ENCODE measurements at regions of chr12 and their contacts with region 1.

Region 1: DNA sequence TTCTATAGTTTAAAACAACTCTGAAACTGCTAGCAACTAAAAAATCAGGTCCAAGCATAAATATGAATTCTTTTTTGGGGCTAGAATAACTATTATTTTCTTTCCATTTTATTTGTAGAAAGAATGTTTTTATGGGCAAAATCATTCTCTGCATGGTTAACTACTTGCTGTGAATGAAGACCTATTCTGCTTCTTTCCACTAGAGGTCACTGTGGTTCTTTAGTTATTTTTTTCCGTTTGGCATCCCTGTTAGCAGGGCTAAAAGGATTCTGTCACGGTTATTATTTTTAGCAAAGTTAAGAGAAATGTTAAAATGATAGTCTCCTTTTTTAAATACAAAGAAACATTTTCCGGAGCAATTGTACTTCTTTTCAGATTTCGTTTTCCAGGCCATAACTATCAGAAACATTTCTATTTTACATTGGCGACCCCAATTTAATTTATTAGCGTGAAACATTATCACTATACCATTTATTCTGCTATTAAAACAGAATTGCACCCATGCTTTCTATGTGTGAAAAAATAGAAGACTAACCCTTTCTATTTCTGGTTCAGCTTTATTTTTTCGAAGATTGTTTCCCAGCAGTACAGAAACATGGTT is 404.8 kb downstream of the ATP23 start:
- DNase-seq: no peak
- ATAC-seq: peak in 1 of 4 donors; percentile 62
- H3K4me3 ChIP-seq: no peak overlapping the region
- H3K27ac ChIP-seq: no peak overlapping the region
- H3K4me1 ChIP-seq: peaks cover 0 to 5% (median 0%) of the 10 kb centered on the region in 12 donors
- H3K27me3 ChIP-seq: no peaks in the 10 kb centered on the region
- CTCF ChIP-seq: peak; percentile 74 to 91 (median 84)
- POLR2A ChIP-seq: no peak

Region 2: DNA sequence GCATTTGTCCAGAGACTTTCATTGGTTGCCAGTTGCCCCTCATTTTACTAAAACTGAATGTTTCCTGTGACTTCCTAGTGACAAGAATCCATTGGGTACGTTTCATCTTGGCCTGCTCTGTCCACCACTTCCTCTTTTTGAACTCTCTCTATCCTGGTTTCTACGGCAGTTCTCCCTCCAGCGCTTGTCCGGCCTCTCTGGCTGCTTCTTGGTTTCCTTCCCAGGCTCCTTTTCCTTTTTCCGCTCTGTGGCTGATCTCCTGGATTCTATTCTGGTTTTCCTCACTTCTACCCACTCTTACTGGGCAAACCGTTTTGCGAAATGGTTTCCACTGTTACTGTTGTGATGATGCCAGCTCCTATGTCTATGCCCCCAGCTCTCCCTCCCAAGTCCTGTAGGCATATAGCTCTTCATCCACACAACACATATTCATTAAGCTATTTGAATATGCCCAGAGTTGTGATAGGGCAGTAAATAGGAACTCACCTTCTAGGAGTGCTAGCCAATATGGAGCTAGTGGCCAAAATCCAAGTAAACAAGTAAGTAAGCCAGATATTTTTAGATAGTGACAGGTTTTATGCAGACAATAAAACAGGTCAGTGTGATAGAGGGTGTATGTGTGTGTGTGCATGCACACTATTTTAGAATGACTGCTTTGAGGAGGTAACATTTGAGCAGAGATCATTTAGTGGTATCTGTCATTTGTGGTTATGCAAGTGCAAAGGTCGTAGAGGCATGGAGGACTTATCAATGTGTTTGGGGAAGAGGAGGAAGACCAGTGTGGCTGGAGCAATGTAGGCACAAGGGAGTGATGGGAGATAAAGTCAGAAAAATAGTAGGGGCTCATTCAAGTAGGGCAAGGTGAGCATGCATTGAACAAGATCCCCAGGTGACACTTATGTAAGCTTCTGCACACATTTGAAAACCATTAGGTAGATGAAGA is 471.7 kb before region 1 on chr12:
- intact Hi-C with region 1: no loop called
- DNase-seq: no peak
- ATAC-seq: peak; percentile 37 to 78 (median 64)
- H3K4me3 ChIP-seq: no peak overlapping the region
- H3K27ac ChIP-seq: peak overlapping the region in 10 of 12 donors; percentile 1 to 64 (median 52)
- H3K4me1 ChIP-seq: peaks cover 0 to 31% (median 24%) of the 10 kb centered on the region in 12 donors
- H3K27me3 ChIP-seq: no peaks in the 10 kb centered on the region
- CTCF ChIP-seq: no peak
- POLR2A ChIP-seq: no peak

Region 3: GRCh38 chr12:58443273-58443980 is 97.3 kb after region 1 on chr12:
- intact Hi-C with region 1: loop called in 8 of 10 experiments (anchors 2 to 10 kb)
- DNase-seq: no peak
- ATAC-seq: peak in 2 of 4 donors; percentile 16 to 33
- H3K4me3 ChIP-seq: no peak overlapping the region
- H3K27ac ChIP-seq: no peak overlapping the region
- H3K4me1 ChIP-seq: peaks cover 0 to 12% (median 0%) of the 10 kb centered on the region in 12 donors
- H3K27me3 ChIP-seq: no peaks in the 10 kb centered on the region
- CTCF ChIP-seq: peak in 11 of 12 donors; percentile 27 to 53 (median 42)
- POLR2A ChIP-seq: no peak

Region 4: DNA sequence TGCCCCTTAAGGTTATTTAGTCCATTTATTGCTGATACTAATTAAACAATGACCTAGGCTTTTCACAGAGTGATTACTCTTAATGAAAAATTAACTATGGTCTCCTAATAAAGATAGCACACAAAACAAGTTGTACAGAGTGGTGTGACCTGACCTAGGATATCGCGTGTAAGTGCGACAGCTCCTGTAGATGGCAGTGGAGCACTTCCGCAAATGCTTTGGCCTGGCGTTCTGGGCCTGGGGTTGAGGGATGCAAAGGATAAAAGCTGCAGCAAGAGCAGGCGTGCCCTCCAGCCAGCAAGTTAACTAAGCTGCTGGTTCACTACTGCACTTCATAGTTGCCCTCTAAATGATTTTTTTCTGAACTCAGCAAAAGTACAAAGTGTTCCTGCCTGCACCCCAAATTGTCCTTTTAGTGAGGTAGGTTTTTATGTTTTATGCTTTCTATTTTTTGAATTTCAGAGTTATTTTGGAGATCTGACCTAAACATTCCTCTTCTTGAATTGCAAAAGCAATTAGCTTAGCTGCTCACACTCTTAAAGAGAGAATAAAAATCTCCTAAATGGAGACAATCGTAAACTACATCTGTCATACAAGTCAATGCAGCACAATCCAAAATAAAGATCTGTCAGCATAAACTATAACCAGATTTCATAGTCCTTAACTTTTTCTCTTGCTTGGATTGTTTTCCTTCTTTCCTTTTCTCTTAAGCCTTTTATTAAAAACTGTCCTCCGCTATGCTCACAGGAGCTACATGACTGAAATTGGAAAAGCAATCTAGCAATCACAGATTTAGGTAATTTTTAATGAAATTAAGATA is 194.6 kb after region 1 on chr12:
- intact Hi-C with region 1: loop called in 2 of 10 experiments (anchors 10 kb)
- DNase-seq: peak; percentile 43 to 67 (median 60)
- ATAC-seq: peak; percentile 82 to 91 (median 88)
- H3K4me3 ChIP-seq: no peak overlapping the region
- H3K27ac ChIP-seq: no peak overlapping the region
- H3K4me1 ChIP-seq: peaks cover 0 to 5% (median 0%) of the 10 kb centered on the region in 12 donors
- H3K27me3 ChIP-seq: no peaks in the 10 kb centered on the region
- CTCF ChIP-seq: peak; percentile 54 to 80 (median 71)
- POLR2A ChIP-seq: no peak

Region 5: DNA sequence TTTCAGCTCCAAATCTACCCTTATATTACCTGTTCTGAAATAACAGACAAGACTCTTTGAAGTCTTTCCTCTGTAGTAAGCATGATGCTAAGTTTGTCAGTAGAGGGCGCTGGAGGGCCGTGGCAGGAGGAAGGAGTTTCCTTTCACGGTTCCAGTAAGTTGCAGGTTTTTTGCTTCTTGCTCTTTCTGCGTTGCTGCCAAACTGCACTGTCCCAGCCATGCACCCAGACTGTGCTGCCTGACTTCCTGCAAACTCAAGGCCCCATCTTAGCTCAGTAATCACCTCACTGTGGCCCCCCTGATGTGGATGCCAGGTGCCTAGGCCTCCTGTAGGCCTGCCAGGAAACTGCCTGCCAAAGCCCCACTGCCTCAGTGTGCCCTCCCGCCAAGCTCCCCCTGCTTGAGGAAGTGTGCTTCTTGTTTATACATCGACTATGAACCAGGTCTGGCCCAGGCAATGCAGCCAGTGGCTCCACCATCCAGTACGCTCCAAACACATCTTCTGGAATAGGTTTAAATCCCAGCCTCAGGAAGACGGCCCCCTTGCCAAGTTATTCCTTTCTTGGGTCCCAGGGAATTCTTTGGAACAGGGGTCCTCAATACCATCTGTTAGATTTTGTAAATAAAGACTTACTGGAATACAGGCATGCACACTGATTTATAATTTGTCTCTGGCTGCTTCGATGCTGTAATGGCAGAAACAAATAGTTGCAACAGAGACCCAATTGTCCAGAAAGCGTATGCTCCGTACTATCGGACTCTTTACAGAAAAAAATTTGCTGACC is 767.9 kb after region 1 on chr12:
- intact Hi-C with region 1: loop called in 1 of 10 experiments (anchors 10 kb)
- DNase-seq: peak; percentile 38 to 71 (median 66)
- ATAC-seq: peak; percentile 64 to 79 (median 74)
- H3K4me3 ChIP-seq: no peak overlapping the region
- H3K27ac ChIP-seq: no peak overlapping the region
- H3K4me1 ChIP-seq: peaks cover 0 to 4% (median 0%) of the 10 kb centered on the region in 12 donors
- H3K27me3 ChIP-seq: no peaks in the 10 kb centered on the region
- CTCF ChIP-seq: peak; percentile 71 to 93 (median 84)
- POLR2A ChIP-seq: no peak

Region 6: GRCh38 chr12:59164991-59165718 is 819.0 kb after region 1 on chr12:
- intact Hi-C with region 1: loop called in 3 of 10 experiments (anchors 5 kb)
- DNase-seq: no peak
- ATAC-seq: no peak
- H3K4me3 ChIP-seq: no peak overlapping the region
- H3K27ac ChIP-seq: no peak overlapping the region
- H3K4me1 ChIP-seq: no peaks in the 10 kb centered on the region
- H3K27me3 ChIP-seq: no peaks in the 10 kb centered on the region
- CTCF ChIP-seq: peak; percentile 25 to 62 (median 42)
- POLR2A ChIP-seq: no peak

Measured in heart left ventricle (tissue), 16 donors.